Activated CD8-positive, alpha-beta T cell treated with anti-CD3 and anti-CD28 coated beads for 36 hours (primary cell): ENCODE measurements at regions of chr7 and their contacts with region 1.

Region 1: GRCh38 chr7:35593896-35594295 is 101.0 kb downstream of the HERPUD2 start:
- DNase-seq: peak; percentile 46
- ATAC-seq: no peak
- H3K4me3 Mint-ChIP-seq: no peak overlapping the region
- H3K27ac Mint-ChIP-seq: no peak overlapping the region
- H3K4me1 Mint-ChIP-seq: peaks cover 3% of the 10 kb centered on the region
- H3K27me3 Mint-ChIP-seq: no peaks in the 10 kb centered on the region
- CTCF ChIP-seq: peak; percentile 44

Region 2: DNA sequence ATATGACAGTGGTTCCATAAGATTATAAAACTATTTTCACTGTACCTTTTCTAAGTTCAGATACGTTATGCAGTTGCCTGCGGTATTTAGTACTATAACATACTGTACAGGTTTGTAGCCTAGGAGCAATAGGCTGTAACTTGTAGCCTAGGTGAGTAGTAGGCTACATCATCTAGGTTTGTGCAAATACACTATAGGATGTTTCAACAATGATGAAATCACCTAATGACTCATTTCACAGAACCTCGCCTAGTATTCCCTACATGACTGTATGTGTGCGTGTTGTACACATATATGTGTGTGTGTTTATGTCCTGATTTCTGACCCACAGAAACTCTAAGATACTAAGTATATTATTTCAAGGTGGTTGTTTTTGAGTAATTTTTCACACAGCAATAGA is 38.0 kb before region 1 on chr7:
- CTCF ChIA-PET with region 1: no interaction called
- POLR2A ChIA-PET with region 1: no interaction called
- intact Hi-C with region 1: no loop called
- DNase-seq: no peak
- ATAC-seq: peak; percentile 20
- H3K4me3 Mint-ChIP-seq: no peak overlapping the region
- H3K27ac Mint-ChIP-seq: no peak overlapping the region
- H3K4me1 Mint-ChIP-seq: no peaks in the 10 kb centered on the region
- H3K27me3 Mint-ChIP-seq: no peaks in the 10 kb centered on the region
- CTCF ChIP-seq: no peak

Region 3: DNA sequence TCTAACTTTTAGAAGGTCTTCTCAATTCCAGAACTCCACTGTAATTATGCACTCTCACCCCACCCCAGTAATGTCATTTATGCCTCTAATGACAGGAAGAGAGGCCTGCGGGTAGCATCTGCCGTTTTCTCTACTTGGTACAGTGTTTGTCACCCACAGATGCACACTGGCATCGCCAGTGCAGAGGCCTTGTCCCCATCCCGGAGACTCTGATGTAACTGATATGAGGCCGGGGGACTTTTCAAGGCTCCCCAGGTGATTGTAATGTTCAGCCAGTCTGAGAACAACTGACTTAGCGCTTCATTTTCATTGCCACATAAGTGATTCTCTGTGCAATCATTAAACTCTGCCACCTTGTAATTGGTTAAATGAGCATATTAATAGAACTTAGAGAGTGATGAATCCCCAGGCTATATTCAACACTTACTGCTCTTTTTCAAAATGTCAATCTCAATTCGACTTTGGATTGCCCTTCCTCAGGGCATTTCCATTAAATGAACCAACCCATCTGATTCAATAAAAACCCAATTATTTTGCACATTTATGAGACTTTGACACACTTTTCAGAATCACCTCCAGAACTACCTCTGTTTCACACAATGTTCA is 12.2 kb before region 1 on chr7:
- CTCF ChIA-PET with region 1: interaction called, 12 read pairs
- POLR2A ChIA-PET with region 1: interaction called, 3 read pairs
- intact Hi-C with region 1: no loop called
- DNase-seq: no peak
- ATAC-seq: no peak
- H3K4me3 Mint-ChIP-seq: no peak overlapping the region
- H3K27ac Mint-ChIP-seq: no peak overlapping the region
- H3K4me1 Mint-ChIP-seq: no peaks in the 10 kb centered on the region
- H3K27me3 Mint-ChIP-seq: no peaks in the 10 kb centered on the region
- CTCF ChIP-seq: no peak